Naive thymus-derived CD8-positive, alpha-beta T cell (primary cell): ENCODE measurements at regions of chr1 and their contacts with region 1.

Region 1: GRCh38 chr1:201481761-201482493 is 12.9 kb upstream of the PHLDA3 start:
- DNase-seq: peak; percentile 61 to 88 (median 74)
- ATAC-seq: peak; percentile 89 to 91
- H3K4me3 Mint-ChIP-seq: peak overlapping the region; percentile 69 to 80 (median 78)
- H3K27ac Mint-ChIP-seq: peak overlapping the region in 3 of 10 donors; percentile 2 to 29 (median 17)
- H3K4me1 Mint-ChIP-seq: peaks cover 8 to 23% (median 20%) of the 10 kb centered on the region in 4 donors
- H3K27me3 Mint-ChIP-seq: peaks cover 11 to 41% (median 20%) of the 10 kb centered on the region in 5 donors

Region 2: DNA sequence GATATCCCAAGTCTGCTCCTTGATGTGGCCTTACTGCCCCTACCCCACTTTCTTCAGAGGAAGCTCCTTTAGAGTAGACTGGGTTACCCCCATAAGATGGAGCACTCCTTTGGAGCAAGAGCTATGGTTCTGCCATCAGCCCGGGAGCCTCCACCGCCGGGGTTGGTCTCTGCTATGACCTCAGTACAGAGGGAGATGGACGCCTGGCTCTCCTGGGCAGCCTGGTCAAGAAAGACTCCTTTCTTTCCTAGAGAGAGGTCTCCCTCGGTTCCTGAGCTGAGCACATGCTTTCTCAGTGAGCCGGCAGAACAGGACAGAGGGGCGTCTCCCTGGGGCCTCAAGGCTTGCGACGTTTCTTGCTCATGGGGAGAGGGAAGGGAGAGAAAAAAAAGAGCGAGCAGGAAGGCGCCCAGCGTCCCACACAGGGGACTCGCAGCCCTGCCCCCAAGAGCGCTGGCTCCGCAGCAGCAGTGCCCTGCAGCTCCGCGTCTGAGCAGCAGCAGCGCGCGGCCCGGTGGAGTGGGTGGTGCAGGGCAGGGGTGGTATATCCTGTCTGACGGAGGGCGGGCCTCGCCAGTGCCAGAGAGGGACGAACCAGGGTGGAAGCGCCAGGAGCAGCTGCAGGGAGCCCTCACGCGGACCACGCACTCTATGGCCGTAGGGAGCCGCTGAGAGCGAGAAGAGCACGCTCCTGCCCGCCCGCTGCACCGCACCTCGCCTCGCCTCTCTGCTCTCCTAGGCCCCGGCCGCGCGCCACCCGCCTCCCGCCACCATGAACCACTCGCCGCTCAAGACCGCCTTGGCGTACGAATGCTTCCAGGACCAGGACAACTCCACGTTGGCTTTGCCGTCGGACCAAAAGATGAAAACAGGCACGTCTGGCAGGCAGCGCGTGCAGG is 198.7 kb before region 1 on chr1 and contains the start of gene PKP1:
- POLR2A ChIA-PET with region 1: no interaction called
- DNase-seq: peak in 4 of 10 donors; percentile 5 to 26 (median 21)
- ATAC-seq: peak; percentile 81 to 92
- H3K4me3 Mint-ChIP-seq: peak within 1 kb of the TSS; percentile 15 to 87 (median 72)
- H3K27ac Mint-ChIP-seq: no peak within 1 kb of the TSS
- H3K4me1 Mint-ChIP-seq: peaks cover 3 to 10% (median 6%) of the 10 kb centered on the region in 4 donors
- H3K27me3 Mint-ChIP-seq: peaks cover 18 to 46% (median 31%) of the 10 kb centered on the region in 5 donors
- polyA plus RNA-seq, gene PKP1: not detected

Region 3: GRCh38 chr1:201506556-201507359 is 24.8 kb after region 1 on chr1 and contains the start of gene CSRP1:
- POLR2A ChIA-PET with region 1: interaction called, 24 read pairs
- DNase-seq: peak; percentile 67 to 90 (median 74)
- ATAC-seq: peak; percentile 95 to 96
- H3K4me3 Mint-ChIP-seq: peak within 1 kb of the TSS; percentile 87 to 95 (median 92)
- H3K27ac Mint-ChIP-seq: peak within 1 kb of the TSS; percentile 72 to 95 (median 92)
- H3K4me1 Mint-ChIP-seq: peaks cover 22 to 60% (median 51%) of the 10 kb centered on the region in 4 donors
- H3K27me3 Mint-ChIP-seq: no peaks in the 10 kb centered on the region
- polyA plus RNA-seq, gene CSRP1: 43.3 to 48.2 (median 46.1) TPM

Region 4: DNA sequence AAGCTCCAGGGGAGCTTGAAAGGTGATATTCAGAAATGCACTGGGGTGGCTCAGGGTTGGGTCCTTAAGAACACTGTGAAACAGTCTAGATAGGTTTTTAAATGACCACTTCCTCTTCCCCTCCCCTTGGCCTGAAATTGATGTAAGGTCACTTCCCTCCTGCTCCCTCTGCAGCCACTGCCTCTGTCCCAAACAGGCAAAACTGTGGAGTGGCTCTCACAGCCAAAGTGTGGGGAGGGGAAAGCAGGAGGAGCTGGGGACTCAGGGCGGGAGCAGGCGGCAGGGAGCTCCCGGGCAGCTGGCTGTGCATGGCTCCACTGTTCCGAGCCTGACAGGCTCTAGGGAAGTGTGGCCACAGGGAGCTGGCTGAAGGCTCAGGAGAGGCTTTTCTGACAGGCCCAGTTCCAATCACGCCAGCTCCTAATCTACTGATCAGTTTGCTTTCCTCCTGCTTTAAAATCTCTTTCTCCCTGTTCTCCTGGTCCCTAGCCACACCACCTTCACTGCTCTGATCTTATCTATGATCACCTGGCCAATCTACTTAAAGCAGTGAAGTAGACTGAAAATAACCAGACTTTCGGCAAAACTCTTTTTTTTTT is 30.1 kb after region 1 on chr1:
- POLR2A ChIA-PET with region 1: interaction called, 24 read pairs
- DNase-seq: no peak
- ATAC-seq: no peak
- H3K4me3 Mint-ChIP-seq: no peak overlapping the region
- H3K27ac Mint-ChIP-seq: no peak overlapping the region
- H3K4me1 Mint-ChIP-seq: peaks cover 6 to 34% (median 22%) of the 10 kb centered on the region in 4 donors
- H3K27me3 Mint-ChIP-seq: no peaks in the 10 kb centered on the region

Region 5: GRCh38 chr1:201538612-201539551 is 57.0 kb after region 1 on chr1 and contains the start of gene NAV1:
- POLR2A ChIA-PET with region 1: no interaction called
- DNase-seq: peak in 1 of 10 donors; percentile 3
- ATAC-seq: peak; percentile 38 to 53
- H3K4me3 Mint-ChIP-seq: peak within 1 kb of the TSS; percentile 66 to 87 (median 82)
- H3K27ac Mint-ChIP-seq: peak within 1 kb of the TSS in 1 of 10 donors; percentile 62
- H3K4me1 Mint-ChIP-seq: peaks cover 9 to 32% (median 24%) of the 10 kb centered on the region in 4 donors
- H3K27me3 Mint-ChIP-seq: peaks cover 43 to 73% (median 54%) of the 10 kb centered on the region in 5 donors
- polyA plus RNA-seq, gene NAV1: 0.10 to 1.9 (median 0.41) TPM